Activated B cell treated with CpG ODN at 0.5 μM for 24 hours (primary cell): ENCODE measurements at regions of chr17 and their contacts with region 1.

Region 1: GRCh38 chr17:50853015-50853615 is 13.0 kb downstream of the TOB1 start:
- DNase-seq: no peak
- ATAC-seq: no peak
- H3K4me3 Mint-ChIP-seq: no peak overlapping the region
- H3K27ac Mint-ChIP-seq: peak overlapping the region; percentile 76
- H3K4me1 Mint-ChIP-seq: peaks cover 14% of the 10 kb centered on the region
- H3K27me3 Mint-ChIP-seq: no peaks in the 10 kb centered on the region
- CTCF ChIP-seq: no peak

Region 2: GRCh38 chr17:50949989-50950881 is 97.1 kb after region 1 on chr17:
- CTCF ChIA-PET with region 1: interaction called, 113 read pairs
- POLR2A ChIA-PET with region 1: interaction called, 3 read pairs
- intact Hi-C with region 1: loop called (anchors 1 kb)
- DNase-seq: no peak
- ATAC-seq: peak; percentile 72
- H3K4me3 Mint-ChIP-seq: peak overlapping the region; percentile 29
- H3K27ac Mint-ChIP-seq: no peak overlapping the region
- H3K4me1 Mint-ChIP-seq: peaks cover 15% of the 10 kb centered on the region
- H3K27me3 Mint-ChIP-seq: peaks cover 3% of the 10 kb centered on the region
- CTCF ChIP-seq: no peak

Region 3: DNA sequence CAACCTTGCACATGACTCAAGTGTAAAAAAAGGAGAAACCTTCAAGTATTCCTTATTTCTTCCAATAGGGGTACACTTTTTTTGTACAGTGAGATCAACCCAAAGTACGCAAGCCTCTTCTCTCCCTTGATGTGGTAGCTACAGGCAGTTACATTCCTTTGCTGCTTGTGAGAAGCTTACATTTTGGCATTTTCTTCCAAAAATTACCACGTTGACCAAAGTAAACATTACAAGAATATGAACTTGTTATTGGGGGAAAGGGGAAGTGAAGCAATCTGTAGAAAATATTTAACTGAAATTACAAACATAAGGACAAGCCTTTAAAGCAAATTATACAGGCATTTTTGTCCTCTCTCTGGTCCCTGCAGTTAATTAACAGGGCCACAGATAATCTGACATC is 110.0 kb after region 1 on chr17:
- CTCF ChIA-PET with region 1: interaction called, 113 read pairs
- POLR2A ChIA-PET with region 1: no interaction called
- intact Hi-C with region 1: no loop called
- DNase-seq: no peak
- ATAC-seq: no peak
- H3K4me3 Mint-ChIP-seq: no peak overlapping the region
- H3K27ac Mint-ChIP-seq: no peak overlapping the region
- H3K4me1 Mint-ChIP-seq: no peaks in the 10 kb centered on the region
- H3K27me3 Mint-ChIP-seq: no peaks in the 10 kb centered on the region
- CTCF ChIP-seq: no peak

Region 4: DNA sequence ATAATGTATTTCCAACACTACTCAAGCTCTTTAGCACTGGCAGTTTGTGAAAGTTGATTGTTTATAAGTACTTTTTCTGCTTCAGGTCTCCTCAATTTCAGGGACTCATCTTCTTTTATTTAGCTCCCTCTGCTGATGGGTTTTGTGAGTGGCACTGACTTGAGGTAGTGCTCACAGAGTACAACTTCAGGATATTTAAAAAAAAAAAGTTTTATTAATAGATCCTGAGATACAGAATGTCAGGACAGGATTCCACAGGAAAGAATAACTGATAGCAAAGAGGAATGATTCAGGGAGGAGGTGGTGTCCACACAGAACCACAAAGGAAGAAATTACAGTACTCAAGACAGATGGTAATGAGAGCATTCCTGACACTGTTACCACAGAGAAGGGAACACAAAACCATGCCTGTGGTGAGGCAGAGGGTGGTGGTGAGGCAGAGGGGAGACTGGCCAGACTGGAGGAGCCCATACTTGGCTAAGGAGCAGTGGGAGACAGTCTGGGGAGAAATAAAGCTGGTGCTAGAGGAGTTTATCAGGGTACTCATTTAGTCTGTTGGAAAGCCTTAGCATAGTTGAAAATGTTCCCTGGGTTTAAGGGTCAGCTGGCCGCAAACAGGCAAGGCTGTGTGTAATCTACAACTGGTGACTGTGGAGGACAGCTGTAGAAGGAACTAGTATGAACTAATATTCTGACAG is 203.8 kb after region 1 on chr17:
- CTCF ChIA-PET with region 1: interaction called, 13 read pairs
- POLR2A ChIA-PET with region 1: no interaction called
- intact Hi-C with region 1: loop called (anchors 1 kb)
- DNase-seq: no peak
- ATAC-seq: peak; percentile 71
- H3K4me3 Mint-ChIP-seq: no peak overlapping the region
- H3K27ac Mint-ChIP-seq: no peak overlapping the region
- H3K4me1 Mint-ChIP-seq: peaks cover 20% of the 10 kb centered on the region
- H3K27me3 Mint-ChIP-seq: no peaks in the 10 kb centered on the region
- CTCF ChIP-seq: peak; percentile 63

Region 5: DNA sequence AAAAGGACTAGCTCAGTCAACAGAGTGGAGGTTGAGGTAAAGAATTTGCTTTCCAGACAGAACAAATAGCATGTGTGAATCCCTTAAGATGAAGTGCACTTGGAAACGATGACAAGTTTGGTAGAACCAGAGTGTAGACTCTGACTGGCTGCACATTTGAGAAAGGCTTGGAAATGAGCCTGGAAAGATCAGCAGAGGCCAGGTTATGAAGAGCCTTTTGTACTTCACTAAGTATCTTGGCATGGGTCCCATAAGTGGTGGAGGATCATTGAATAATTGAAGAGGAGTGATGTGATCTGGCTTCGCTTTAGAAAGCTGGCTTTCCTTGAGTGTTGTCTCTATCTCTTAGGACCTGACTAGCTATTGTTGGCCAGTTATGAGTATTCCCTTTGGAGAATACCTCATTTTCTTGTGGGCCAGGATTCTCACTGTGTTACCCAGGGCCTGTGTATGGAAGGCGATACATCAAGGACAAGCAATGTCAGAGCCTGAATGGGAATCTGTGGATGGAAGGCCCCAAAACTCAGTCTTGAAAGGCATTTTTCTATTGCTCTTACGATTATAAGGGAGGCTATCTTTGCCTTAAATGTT is 737.0 kb after region 1 on chr17:
- CTCF ChIA-PET with region 1: no interaction called
- POLR2A ChIA-PET with region 1: no interaction called
- intact Hi-C with region 1: no loop called
- DNase-seq: no peak
- ATAC-seq: no peak
- H3K4me3 Mint-ChIP-seq: no peak overlapping the region
- H3K27ac Mint-ChIP-seq: no peak overlapping the region
- H3K4me1 Mint-ChIP-seq: no peaks in the 10 kb centered on the region
- H3K27me3 Mint-ChIP-seq: peaks cover 4% of the 10 kb centered on the region
- CTCF ChIP-seq: no peak